Activated T-helper 2 cell treated with anti-CD3 and anti-CD28 coated beads, Interferon-gamma antibody, Interleukin-2, Interleukin-4, amounts not matched to agents 10 μg/mL and 5 μg/mL and 100 μg/mL, durations not matched to agents 14 hours and 24 hours and 36 hours (primary cell): ENCODE measurements at regions of chr1 and their contacts with region 1.

Region 1: GRCh38 chr1:108828022-108828961 is 28.6 kb downstream of the AKNAD1 start:
- DNase-seq: peak; percentile 50
- H3K4me3 Mint-ChIP-seq: no peak overlapping the region
- H3K27ac Mint-ChIP-seq: no peak overlapping the region
- H3K4me1 Mint-ChIP-seq: peaks cover 3% of the 10 kb centered on the region
- H3K27me3 Mint-ChIP-seq: peaks cover 6% of the 10 kb centered on the region

Region 2: DNA sequence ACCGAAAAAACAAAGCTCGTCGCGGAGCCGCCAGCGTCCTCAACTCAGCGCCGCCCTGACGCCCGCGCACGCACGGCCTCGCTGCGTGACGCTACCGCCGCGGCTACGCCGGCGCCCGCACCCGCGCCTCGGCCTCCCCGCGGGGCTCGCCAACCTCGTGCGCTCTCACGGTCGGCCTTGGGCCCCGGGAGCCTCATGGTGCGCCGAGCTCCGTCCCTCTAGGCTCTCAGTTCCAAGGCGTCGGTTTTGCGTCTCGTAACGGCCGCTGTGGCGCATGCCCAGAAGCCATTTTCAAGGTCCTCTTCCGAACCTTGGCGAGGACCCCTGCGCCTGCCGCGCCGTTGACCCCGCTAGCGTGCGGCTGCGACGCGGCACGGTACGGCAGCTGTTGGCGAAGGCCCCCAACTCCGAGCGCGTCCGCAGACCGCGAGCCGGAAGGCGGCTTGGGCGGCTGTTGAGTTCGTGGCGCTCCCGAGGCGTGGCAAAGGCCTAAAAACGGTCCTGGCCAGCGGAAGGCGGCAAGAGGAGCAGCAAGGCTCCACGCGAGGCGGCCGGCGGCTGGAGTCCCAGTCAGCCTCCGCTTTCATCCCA is 167.2 kb before region 1 on chr1 and contains the start of gene HENMT1:
- intact Hi-C with region 1: no loop called
- DNase-seq: peak; percentile 76
- H3K4me3 Mint-ChIP-seq: peak within 1 kb of the TSS; percentile 85
- H3K27ac Mint-ChIP-seq: peak within 1 kb of the TSS; percentile 95
- H3K4me1 Mint-ChIP-seq: peaks cover 40% of the 10 kb centered on the region
- H3K27me3 Mint-ChIP-seq: no peaks in the 10 kb centered on the region
- total RNA-seq, gene HENMT1: 16.5 and 17.7 TPM in 2 replicates

Region 3: GRCh38 chr1:108897865-108898720 is 69.8 kb after region 1 on chr1:
- intact Hi-C with region 1: loop called (anchors 1 kb)
- DNase-seq: no peak
- H3K4me3 Mint-ChIP-seq: no peak overlapping the region
- H3K27ac Mint-ChIP-seq: no peak overlapping the region
- H3K4me1 Mint-ChIP-seq: no peaks in the 10 kb centered on the region
- H3K27me3 Mint-ChIP-seq: no peaks in the 10 kb centered on the region